ENCODE measurements at regions of chr9 and their contacts with region 1.

Region 1: GRCh38 chr9:131366761-131367401 is 27.0 kb upstream of the PRRC2B start:
- DNase-seq: no peak
- ATAC-seq: no peak
- H3K4me3 ChIP-seq: no peak overlapping the region
- H3K4me3 Mint-ChIP-seq: no peak overlapping the region
- H3K27ac ChIP-seq: no peak overlapping the region
- H3K27ac Mint-ChIP-seq: peak overlapping the region in 1 of 9 donors; percentile 31
- H3K4me1 ChIP-seq: peaks cover 0 to under 1% of the 10 kb centered on the region in 2 donors
- H3K4me1 Mint-ChIP-seq: peaks cover 1 to 43% (median 19%) of the 10 kb centered on the region in 7 donors
- H3K27me3 ChIP-seq: no peaks in the 10 kb centered on the region
- H3K27me3 Mint-ChIP-seq: no peaks in the 10 kb centered on the region

Region 2: DNA sequence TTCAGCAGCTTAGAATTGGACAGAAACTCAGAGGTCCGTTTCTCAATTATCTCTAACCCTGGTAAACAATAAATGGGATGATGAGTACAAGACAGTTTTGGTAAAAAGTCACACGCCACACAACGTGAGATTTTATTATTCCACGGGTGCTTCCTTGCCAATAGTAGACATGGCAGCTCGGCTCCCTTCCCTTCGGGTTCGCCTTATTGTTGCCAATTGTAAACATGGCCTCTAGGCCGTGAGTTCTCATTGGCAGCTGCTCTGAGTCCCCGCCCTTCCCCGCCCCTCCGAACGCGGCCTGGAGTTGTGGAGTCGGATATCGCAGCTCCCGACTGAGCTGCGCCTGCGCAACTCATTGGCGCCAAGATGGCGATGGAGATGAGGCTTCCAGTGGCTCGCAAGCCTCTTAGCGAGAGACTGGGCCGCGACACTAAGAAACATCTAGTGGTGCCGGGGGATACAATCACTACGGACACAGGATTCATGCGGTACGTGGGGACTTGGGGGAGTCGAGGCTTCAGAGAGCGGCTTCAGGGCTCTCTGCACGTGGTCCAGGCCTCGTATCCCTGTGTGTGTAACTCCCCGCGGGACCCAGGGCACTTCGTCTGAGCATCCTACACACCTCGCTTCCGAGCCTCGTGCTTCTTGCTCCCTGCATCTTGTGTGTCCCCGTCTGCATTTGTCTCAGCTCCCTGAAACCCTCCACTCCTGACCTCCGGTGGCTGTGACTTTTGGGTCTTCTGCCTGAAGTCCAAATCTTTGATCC is 673.3 kb before region 1 on chr9 and contains the start of gene EXOSC2:
- CTCF ChIA-PET with region 1: no interaction called
- POLR2A ChIA-PET with region 1: no interaction called
- intact Hi-C with region 1: loop called in 1 of 2 experiments (anchors 5 kb)
- DNase-seq: peak; percentile 76 to 99 (median 89)
- ATAC-seq: peak; percentile 100
- H3K4me3 ChIP-seq: peak within 1 kb of the TSS; percentile 91
- H3K4me3 Mint-ChIP-seq: peak within 1 kb of the TSS; percentile 83 to 98 (median 95)
- H3K27ac ChIP-seq: peak within 1 kb of the TSS; percentile 85
- H3K27ac Mint-ChIP-seq: peak within 1 kb of the TSS; percentile 88 to 97 (median 94)
- H3K4me1 ChIP-seq: peaks cover 13 to 20% of the 10 kb centered on the region in 2 donors
- H3K4me1 Mint-ChIP-seq: peaks cover 20 to 54% (median 46%) of the 10 kb centered on the region in 7 donors
- H3K27me3 ChIP-seq: no peaks in the 10 kb centered on the region
- H3K27me3 Mint-ChIP-seq: no peaks in the 10 kb centered on the region
- total RNA-seq, gene EXOSC2: 44.2 to 60.7 (median 59.5) TPM

Region 3: GRCh38 chr9:131111854-131112311 is 255.0 kb before region 1 on chr9:
- CTCF ChIA-PET with region 1: no interaction called
- POLR2A ChIA-PET with region 1: no interaction called
- intact Hi-C with region 1: no loop called
- DNase-seq: no peak
- ATAC-seq: no peak
- H3K4me3 ChIP-seq: no peak overlapping the region
- H3K4me3 Mint-ChIP-seq: no peak overlapping the region
- H3K27ac ChIP-seq: no peak overlapping the region
- H3K27ac Mint-ChIP-seq: no peak overlapping the region
- H3K4me1 ChIP-seq: no peaks in the 10 kb centered on the region
- H3K4me1 Mint-ChIP-seq: peaks cover 0 to 2% (median 0%) of the 10 kb centered on the region in 7 donors
- H3K27me3 ChIP-seq: no peaks in the 10 kb centered on the region
- H3K27me3 Mint-ChIP-seq: peaks cover 0 to 3% (median 0%) of the 10 kb centered on the region in 5 donors

Region 4: DNA sequence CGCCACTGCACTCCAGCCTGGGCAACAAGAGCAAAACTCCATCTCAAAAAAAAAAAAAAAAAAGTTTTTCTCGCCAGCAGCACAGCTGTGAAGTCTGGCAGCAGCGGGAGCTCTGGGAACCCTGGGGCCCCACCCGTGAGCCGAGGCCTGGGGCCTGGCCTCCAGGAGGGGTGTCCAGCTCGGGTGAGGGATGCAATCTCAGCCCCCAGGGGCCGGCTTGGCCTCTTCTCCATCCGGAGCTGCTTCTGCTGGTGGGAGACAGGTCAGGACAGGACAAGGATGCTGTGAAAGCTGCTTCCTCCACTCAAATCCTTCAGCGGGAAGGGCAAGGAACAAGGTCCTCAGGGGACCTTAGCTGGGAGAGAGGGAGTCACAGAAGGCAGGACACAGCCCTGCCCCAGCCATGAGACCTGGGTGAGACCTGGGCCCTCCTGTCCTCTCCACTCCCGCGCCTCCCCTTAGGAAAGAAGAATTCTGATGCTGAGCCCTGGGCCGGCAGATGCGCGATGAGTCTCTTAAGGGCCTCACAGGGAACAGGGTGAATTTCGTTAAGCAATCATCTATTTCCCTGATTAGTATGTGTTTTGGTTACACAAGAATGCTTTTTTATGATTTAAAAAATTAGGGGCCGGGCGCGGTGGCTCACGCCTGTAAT is 46.7 kb before region 1 on chr9:
- CTCF ChIA-PET with region 1: no interaction called
- POLR2A ChIA-PET with region 1: no interaction called
- intact Hi-C with region 1: no loop called
- DNase-seq: no peak
- ATAC-seq: no peak
- H3K4me3 ChIP-seq: no peak overlapping the region
- H3K4me3 Mint-ChIP-seq: no peak overlapping the region
- H3K27ac ChIP-seq: no peak overlapping the region
- H3K27ac Mint-ChIP-seq: no peak overlapping the region
- H3K4me1 ChIP-seq: no peaks in the 10 kb centered on the region
- H3K4me1 Mint-ChIP-seq: peaks cover 0 to 1% (median 0%) of the 10 kb centered on the region in 7 donors
- H3K27me3 ChIP-seq: no peaks in the 10 kb centered on the region
- H3K27me3 Mint-ChIP-seq: no peaks in the 10 kb centered on the region

Region 5: DNA sequence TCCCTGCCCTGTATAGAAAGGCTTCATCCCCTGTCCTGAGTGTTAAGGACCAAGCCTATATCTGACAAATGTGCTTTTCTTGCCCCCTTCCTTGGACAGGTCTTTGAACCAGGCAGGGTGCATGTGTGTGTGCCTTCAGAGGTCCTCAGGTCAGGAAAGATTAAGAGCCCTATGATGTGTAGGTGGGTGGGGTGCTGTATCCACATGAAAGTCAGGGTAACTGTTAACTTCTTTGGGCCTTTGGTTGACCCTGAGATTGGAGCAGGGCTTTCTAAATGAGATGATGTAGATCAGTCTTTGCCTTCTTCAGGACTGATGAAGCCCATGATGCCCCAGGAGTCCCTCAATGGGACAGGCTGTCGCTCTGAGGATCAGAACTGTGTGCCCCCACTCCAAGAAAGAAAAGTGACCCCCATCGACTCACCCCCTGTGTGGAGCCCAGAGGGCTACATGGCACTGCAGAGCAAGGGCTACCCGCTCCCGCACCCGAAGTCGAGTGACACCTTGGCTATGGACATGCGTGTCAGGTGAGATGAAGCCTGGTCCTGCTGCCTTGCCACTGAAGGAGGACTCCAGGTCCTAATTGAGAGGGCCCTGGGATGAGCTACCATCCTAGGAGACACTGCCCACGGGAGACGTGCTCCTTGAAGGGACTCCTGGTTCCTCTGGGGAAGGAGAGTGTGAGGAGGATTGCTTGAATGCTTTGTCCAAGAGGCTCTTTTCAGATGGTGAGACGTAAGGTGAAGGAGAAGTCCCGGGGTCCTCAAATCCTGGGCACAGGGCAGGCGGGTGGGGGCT is 106.5 kb after region 1 on chr9:
- CTCF ChIA-PET with region 1: no interaction called
- POLR2A ChIA-PET with region 1: no interaction called
- intact Hi-C with region 1: loop called in 1 of 2 experiments (anchors 5 kb)
- DNase-seq: no peak
- ATAC-seq: no peak
- H3K4me3 ChIP-seq: no peak overlapping the region
- H3K4me3 Mint-ChIP-seq: no peak overlapping the region
- H3K27ac ChIP-seq: no peak overlapping the region
- H3K27ac Mint-ChIP-seq: peak overlapping the region in 5 of 9 donors; percentile 49 to 73 (median 53)
- H3K4me1 ChIP-seq: no peaks in the 10 kb centered on the region
- H3K4me1 Mint-ChIP-seq: peaks cover 5 to 16% (median 8%) of the 10 kb centered on the region in 7 donors
- H3K27me3 ChIP-seq: no peaks in the 10 kb centered on the region
- H3K27me3 Mint-ChIP-seq: no peaks in the 10 kb centered on the region

Region 6: GRCh38 chr9:131517761-131518190 is 150.9 kb after region 1 on chr9:
- CTCF ChIA-PET with region 1: no interaction called
- POLR2A ChIA-PET with region 1: no interaction called
- intact Hi-C with region 1: no loop called
- DNase-seq: no peak
- ATAC-seq: no peak
- H3K4me3 ChIP-seq: no peak overlapping the region
- H3K4me3 Mint-ChIP-seq: no peak overlapping the region
- H3K27ac ChIP-seq: no peak overlapping the region
- H3K27ac Mint-ChIP-seq: peak overlapping the region in 1 of 9 donors; percentile 48
- H3K4me1 ChIP-seq: no peaks in the 10 kb centered on the region
- H3K4me1 Mint-ChIP-seq: peaks cover 0 to 6% (median 0%) of the 10 kb centered on the region in 7 donors
- H3K27me3 ChIP-seq: no peaks in the 10 kb centered on the region
- H3K27me3 Mint-ChIP-seq: no peaks in the 10 kb centered on the region

Region 7: DNA sequence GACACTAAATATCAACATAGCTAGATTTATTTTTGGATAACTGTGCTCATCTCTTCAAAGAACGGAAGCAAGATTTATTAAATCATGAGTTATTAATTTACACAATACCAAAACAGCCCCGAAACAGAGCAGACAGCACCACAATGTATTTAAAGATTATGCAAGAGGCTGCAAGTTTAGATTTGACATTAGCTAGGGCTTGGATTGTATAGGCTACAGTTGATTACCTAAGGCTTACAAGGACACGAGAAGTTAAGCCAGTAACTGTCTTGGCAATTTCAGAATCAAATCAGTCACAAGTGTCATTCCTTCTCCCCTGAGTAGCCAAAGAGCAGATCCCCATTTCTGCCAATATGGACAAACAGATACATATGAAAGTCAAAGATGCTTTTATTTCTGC is 560.2 kb after region 1 on chr9:
- CTCF ChIA-PET with region 1: no interaction called
- POLR2A ChIA-PET with region 1: no interaction called
- intact Hi-C with region 1: no loop called
- DNase-seq: no peak
- ATAC-seq: no peak
- H3K4me3 ChIP-seq: no peak overlapping the region
- H3K4me3 Mint-ChIP-seq: no peak overlapping the region
- H3K27ac ChIP-seq: no peak overlapping the region
- H3K27ac Mint-ChIP-seq: peak overlapping the region in 1 of 9 donors; percentile 6
- H3K4me1 ChIP-seq: no peaks in the 10 kb centered on the region
- H3K4me1 Mint-ChIP-seq: peaks cover 0 to 8% (median 6%) of the 10 kb centered on the region in 7 donors
- H3K27me3 ChIP-seq: no peaks in the 10 kb centered on the region
- H3K27me3 Mint-ChIP-seq: no peaks in the 10 kb centered on the region

Measured in naive thymus-derived CD4-positive, alpha-beta T cell (primary cell).